WTC11 (cell line): ENCODE measurements at regions of chr17 and their contacts with region 1.

Region 1: GRCh38 chr17:50297407-50297865 is 23.2 kb downstream of the TMEM92 start:
- DNase-seq: peak; percentile 91
- ATAC-seq: peak; percentile 94
- H3K4me3 Mint-ChIP-seq: no peak overlapping the region
- H3K27ac Mint-ChIP-seq: no peak overlapping the region
- H3K4me1 Mint-ChIP-seq: peaks cover 11% of the 10 kb centered on the region
- H3K27me3 Mint-ChIP-seq: peaks cover 7% of the 10 kb centered on the region
- CTCF ChIP-seq: peak; percentile 92

Region 2: GRCh38 chr17:50213026-50214022 is 84.1 kb before region 1 on chr17:
- CTCF ChIA-PET with region 1: interaction called, 22 read pairs
- POLR2A ChIA-PET with region 1: no interaction called
- DNase-seq: peak; percentile 56
- ATAC-seq: peak; percentile 71
- H3K4me3 Mint-ChIP-seq: no peak overlapping the region
- H3K27ac Mint-ChIP-seq: no peak overlapping the region
- H3K4me1 Mint-ChIP-seq: peaks cover 48% of the 10 kb centered on the region
- H3K27me3 Mint-ChIP-seq: peaks cover 10% of the 10 kb centered on the region
- CTCF ChIP-seq: no peak

Region 3: DNA sequence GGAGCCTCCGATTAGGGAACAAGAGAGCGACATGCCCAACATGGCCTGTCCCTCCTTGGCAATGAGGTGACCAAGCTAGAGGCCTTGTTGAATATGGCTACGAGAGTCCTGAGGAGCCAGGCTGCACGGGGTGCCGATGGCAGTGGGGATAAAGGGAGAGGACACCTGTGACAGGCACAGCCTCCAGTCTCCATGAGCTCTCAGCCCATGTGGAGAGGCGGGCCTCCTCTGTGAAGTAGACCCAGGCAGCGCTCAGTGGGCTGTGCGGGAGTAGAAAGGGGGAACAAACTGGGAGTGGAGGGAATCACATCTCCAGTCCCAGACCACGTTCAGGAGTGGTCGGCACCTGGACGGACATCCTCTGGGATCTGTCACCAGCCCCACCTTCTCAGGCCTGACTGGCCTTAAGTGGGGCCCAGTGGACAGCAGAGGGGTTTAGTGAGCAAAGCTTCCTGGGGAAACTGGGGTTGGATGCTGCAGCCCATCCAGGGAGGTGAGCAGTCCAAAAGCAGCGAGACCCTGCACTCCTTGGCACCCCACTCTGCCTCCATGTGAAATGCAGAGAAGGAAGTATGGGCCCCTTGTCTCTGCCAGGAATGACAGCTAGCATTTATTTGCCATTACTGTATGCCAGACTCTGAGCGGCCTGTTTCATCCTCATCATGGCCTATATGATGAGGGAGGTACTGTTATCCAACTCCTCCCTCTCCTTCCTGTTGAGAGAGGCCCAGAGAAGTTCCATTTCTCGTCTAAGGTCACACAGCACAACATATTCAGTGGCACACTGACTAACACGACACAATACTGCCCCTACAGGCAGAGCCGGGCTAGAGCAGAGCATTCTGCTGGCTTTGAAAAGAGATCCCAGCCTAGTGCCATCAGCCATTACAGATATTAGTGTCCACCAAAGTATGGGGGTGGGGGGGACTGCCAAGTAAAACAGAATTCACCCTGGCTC is 27.7 kb before region 1 on chr17:
- CTCF ChIA-PET with region 1: interaction called, 19 read pairs
- POLR2A ChIA-PET with region 1: no interaction called
- DNase-seq: peak; percentile 81
- ATAC-seq: peak; percentile 54
- H3K4me3 Mint-ChIP-seq: no peak overlapping the region
- H3K27ac Mint-ChIP-seq: no peak overlapping the region
- H3K4me1 Mint-ChIP-seq: peaks cover 38% of the 10 kb centered on the region
- H3K27me3 Mint-ChIP-seq: peaks cover 12% of the 10 kb centered on the region
- CTCF ChIP-seq: peak; percentile 61

Region 4: GRCh38 chr17:50331085-50331791 is 33.8 kb after region 1 on chr17:
- CTCF ChIA-PET with region 1: interaction called, 35 read pairs
- POLR2A ChIA-PET with region 1: no interaction called
- DNase-seq: no peak
- ATAC-seq: no peak
- H3K4me3 Mint-ChIP-seq: no peak overlapping the region
- H3K27ac Mint-ChIP-seq: no peak overlapping the region
- H3K4me1 Mint-ChIP-seq: peaks cover 17% of the 10 kb centered on the region
- H3K27me3 Mint-ChIP-seq: no peaks in the 10 kb centered on the region
- CTCF ChIP-seq: no peak

Region 5: GRCh38 chr17:50345432-50346312 is 48.2 kb after region 1 on chr17 and contains the start of gene XYLT2:
- CTCF ChIA-PET with region 1: interaction called, 11 read pairs
- POLR2A ChIA-PET with region 1: no interaction called
- DNase-seq: peak; percentile 82
- ATAC-seq: peak; percentile 66
- H3K4me3 Mint-ChIP-seq: peak within 1 kb of the TSS; percentile 93
- H3K27ac Mint-ChIP-seq: peak within 1 kb of the TSS; percentile 57; the same call in 1 of the 2 replicates
- H3K4me1 Mint-ChIP-seq: peaks cover 32% of the 10 kb centered on the region
- H3K27me3 Mint-ChIP-seq: peaks cover 14% of the 10 kb centered on the region
- CTCF ChIP-seq: no peak
- total RNA-seq, gene XYLT2: 35.7 to 39.7 TPM (median 37.9 TPM) in 3 replicates

Region 6: GRCh38 chr17:50468409-50469207 is 171.2 kb after region 1 on chr17 and contains the start of gene CHAD:
- CTCF ChIA-PET with region 1: no interaction called
- POLR2A ChIA-PET with region 1: no interaction called
- DNase-seq: peak; percentile 40
- ATAC-seq: peak; percentile 41
- H3K4me3 Mint-ChIP-seq: peak within 1 kb of the TSS; percentile 61
- H3K27ac Mint-ChIP-seq: no peak within 1 kb of the TSS
- H3K4me1 Mint-ChIP-seq: peaks cover 23% of the 10 kb centered on the region
- H3K27me3 Mint-ChIP-seq: peaks cover 27% of the 10 kb centered on the region
- CTCF ChIP-seq: no peak
- total RNA-seq, gene CHAD: 0.09 TPM in 2 of 3 replicates, not detected in the other